ENCODE measurements at regions of chr19 and their contacts with region 1.

Region 1: GRCh38 chr19:49497047-49497788 is 984 bp downstream of the RPS11 start:
- DNase-seq: peak; percentile 49
- H3K4me3 ChIP-seq: peak overlapping the region; percentile 85 to 100 (median 97)
- H3K27ac ChIP-seq: peak overlapping the region; percentile 91
- H3K4me1 ChIP-seq: peaks cover 36% of the 10 kb centered on the region
- H3K27me3 ChIP-seq: no peaks in the 10 kb centered on the region
- CTCF ChIP-seq: no peak
- POLR2A ChIP-seq: no peak

Region 2: DNA sequence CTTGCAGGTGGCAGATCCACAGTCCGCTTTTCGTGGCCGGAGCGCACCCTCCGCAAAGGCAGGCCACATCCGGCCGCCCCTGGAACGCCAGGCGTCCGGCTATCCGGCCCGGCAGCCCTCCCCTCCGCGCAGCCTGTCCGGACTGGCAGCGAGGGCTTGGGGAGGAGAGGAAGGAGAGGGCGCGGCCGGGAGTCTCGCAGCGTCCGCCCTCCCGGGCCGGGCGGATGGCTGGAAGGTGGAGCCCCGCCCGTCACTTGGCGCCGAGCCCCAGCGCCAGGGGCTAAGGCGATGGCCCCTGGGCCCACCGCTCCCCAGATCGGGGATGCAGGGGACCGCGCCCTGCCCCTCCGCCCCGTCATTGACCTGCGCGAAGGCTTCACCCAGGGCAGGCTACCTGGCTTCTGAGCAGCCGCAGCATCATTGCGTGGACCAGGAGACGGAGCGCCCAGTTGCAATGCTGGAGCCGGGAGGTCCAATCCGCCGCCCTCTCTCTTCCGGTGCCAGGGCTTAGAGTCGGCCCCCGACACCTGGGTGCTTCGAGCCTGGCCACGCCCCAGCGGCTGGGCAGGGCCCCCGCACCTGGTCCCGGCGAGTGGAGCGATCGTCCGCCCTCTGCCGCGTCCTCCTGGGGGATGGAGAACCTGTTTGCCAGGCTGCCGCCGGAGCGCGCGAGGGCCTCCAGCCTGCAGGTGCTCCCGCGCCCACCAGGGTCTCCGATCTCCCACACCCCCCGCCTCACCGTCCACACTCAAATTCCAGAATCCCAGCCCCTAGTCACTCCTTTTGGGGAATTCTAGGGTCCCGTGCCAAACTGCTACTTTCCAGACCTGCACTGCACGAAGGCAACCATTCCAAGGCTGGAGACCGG is 744.5 kb before region 1 on chr19 and contains the start of gene FUT1:
- CTCF ChIA-PET with region 1: no interaction called
- POLR2A ChIA-PET with region 1: interaction called, 15 read pairs
- dilution Hi-C with region 1: no loop called
- intact Hi-C with region 1: no loop called
- DNase-seq: no peak
- H3K4me3 ChIP-seq: peak within 1 kb of the TSS; percentile 56 to 81 (median 65)
- H3K27ac ChIP-seq: peak within 1 kb of the TSS; percentile 5
- H3K4me1 ChIP-seq: peaks cover 11% of the 10 kb centered on the region
- H3K27me3 ChIP-seq: no peaks in the 10 kb centered on the region
- CTCF ChIP-seq: no peak
- POLR2A ChIP-seq: peak; percentile 81
- total RNA-seq, gene FUT1: 4.8 and 5.2 TPM in 2 replicates

Region 3: DNA sequence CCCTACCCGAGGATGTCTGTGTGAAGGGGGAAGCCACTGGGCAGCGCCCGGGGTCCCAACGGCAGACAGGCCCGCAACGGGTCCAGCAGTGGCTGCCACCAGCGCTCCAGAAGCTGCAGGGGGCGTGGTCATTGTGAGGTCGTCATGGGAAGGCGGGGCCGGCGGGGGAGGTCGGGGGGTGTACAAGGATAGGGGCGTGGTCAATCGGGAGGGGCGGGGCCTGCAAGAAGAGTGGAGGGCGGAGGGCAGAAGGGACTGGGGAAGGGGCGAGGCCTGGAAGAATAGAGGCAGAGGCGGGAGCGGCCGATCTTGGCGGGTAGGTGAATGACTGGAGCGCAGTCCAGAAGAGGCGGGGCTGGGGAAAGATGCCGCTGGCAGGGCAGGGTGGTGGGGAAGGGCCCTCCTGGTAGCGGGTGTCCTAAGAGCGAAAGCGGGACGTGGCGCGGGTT is 311.5 kb after region 1 on chr19:
- CTCF ChIA-PET with region 1: no interaction called
- POLR2A ChIA-PET with region 1: no interaction called
- dilution Hi-C with region 1: no loop called
- intact Hi-C with region 1: loop called (anchors 5 kb)
- DNase-seq: peak; percentile 85
- H3K4me3 ChIP-seq: peak overlapping the region; percentile 46 to 59 (median 59)
- H3K27ac ChIP-seq: no peak overlapping the region
- H3K4me1 ChIP-seq: peaks cover 15% of the 10 kb centered on the region
- H3K27me3 ChIP-seq: no peaks in the 10 kb centered on the region
- CTCF ChIP-seq: no peak
- POLR2A ChIP-seq: no peak

Measured in endothelial cell of umbilical vein (primary cell).